ENCODE measurements at regions of chr3 and their contacts with region 1.

Region 1: DNA sequence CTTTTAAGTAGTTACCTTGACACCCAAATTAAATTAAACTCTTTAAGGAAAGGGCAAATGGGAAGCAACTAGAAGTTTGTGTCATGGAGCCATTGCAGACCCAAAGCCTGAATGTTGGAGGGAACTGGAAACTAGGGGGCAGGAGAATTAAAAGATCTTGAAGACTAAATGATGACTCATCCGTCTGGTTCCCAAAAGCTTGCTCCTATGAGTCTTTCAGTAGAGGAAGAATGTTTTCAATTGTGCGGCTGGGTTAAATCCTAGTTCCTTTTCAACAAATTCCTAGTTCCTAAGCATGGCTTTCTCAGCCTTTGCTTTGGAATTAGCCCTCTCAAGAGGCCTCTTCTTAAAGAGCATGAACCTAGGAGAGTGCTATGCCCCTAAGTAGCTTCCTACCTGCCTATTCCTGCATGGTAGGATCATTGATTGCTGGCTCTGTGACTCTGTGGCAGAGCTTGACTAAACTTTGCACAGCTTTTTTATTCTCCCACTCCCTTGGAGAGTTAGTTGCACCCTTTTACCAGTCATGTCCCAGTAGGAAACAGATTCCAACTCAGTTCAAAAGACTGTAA is 17.7 kb downstream of the CLEC3B start:
- DNase-seq: no peak
- ATAC-seq: no peak
- H3K4me3 ChIP-seq: no peak overlapping the region
- H3K27ac ChIP-seq: no peak overlapping the region
- H3K4me1 ChIP-seq: no peaks in the 10 kb centered on the region
- H3K27me3 ChIP-seq: no peaks in the 10 kb centered on the region
- CTCF ChIP-seq: no peak
- POLR2A ChIP-seq: no peak

Region 2: GRCh38 chr3:45210308-45211041 is 166.7 kb after region 1 on chr3:
- intact Hi-C with region 1: loop called (anchors 5 kb)
- DNase-seq: peak; percentile 88 to 90 (median 89)
- ATAC-seq: peak; percentile 97
- H3K4me3 ChIP-seq: no peak overlapping the region
- H3K27ac ChIP-seq: no peak overlapping the region
- H3K4me1 ChIP-seq: peaks cover 7% of the 10 kb centered on the region
- H3K27me3 ChIP-seq: no peaks in the 10 kb centered on the region
- CTCF ChIP-seq: peak; percentile 68 to 99 (median 94)
- POLR2A ChIP-seq: no peak